ENCODE measurements at regions of chr4 and their contacts with region 1.

Region 1: GRCh38 chr4:152640058-152640833 is 39.6 kb downstream of the TMEM154 start:
- DNase-seq: peak; percentile 20 to 25
- ATAC-seq: peak; percentile 68 to 74; a peak in 4 of 6 replicates
- H3K4me3 ChIP-seq: no peak overlapping the region
- H3K27ac ChIP-seq: no peak overlapping the region
- H3K4me1 ChIP-seq: no peaks in the 10 kb centered on the region; the same call in 2 of the 3 replicates
- CTCF ChIP-seq: peak; percentile 69
- EP300 ChIP-seq: no peak
- POLR2A ChIP-seq: no peak
- RAD21 ChIP-seq: peak; percentile 71 to 75

Region 2: DNA sequence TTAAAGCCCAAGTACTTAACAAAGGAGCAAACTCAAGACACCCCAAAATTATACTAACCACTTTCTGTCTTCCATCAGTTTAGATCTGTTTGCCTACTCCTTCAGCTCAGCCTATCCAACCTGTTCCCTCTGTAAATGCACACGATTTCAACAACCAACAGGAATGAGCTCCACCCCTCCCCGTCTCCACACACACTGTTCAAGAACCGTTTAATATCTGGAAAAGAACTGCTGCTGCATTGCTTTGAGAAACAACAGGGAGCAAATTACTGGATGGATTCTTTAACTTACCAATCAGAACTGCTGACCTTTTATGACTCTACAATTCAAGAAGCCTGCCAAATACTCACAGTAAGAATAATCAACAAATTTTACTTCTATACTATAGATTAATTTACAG is 191.4 kb before region 1 on chr4:
- CTCF ChIA-PET with region 1: interaction called, 10 read pairs
- POLR2A ChIA-PET with region 1: no interaction called
- DNase-seq: no peak
- ATAC-seq: no peak
- H3K4me3 ChIP-seq: no peak overlapping the region
- H3K27ac ChIP-seq: no peak overlapping the region
- H3K4me1 ChIP-seq: no peaks in the 10 kb centered on the region
- CTCF ChIP-seq: no peak
- EP300 ChIP-seq: no peak
- POLR2A ChIP-seq: no peak
- RAD21 ChIP-seq: no peak

Region 3: DNA sequence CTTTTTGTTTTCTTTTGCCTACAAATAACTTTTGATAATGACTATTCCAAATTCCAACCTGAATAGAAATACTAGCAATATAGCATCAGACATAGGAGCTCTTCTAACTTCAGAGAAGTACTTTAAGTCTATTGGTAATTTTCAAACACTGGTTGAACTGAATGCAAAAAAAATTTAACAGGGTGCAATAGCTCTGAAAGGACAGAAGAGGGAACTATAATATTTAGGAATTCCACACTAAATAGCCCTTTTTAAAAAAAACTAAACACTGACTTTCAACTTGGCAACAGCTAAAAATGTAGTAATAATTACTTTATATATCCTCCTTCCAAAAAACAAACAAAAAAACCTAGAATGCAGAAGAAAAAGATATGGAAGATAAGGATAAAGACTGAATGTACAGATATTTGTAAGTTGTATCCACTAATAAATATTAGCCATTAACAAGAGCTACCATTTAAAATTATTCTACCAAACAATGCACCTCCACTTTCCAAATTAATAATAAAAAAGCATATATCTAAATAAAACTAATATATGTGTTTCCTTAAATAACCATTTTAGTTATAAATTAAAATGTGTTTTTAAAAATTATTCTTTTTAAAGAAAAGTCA is 185.7 kb before region 1 on chr4:
- CTCF ChIA-PET with region 1: interaction called, 11 read pairs
- POLR2A ChIA-PET with region 1: no interaction called
- DNase-seq: peak; percentile 10 to 12
- ATAC-seq: peak in 1 of 2 experiments; percentile 30; a peak in 1 of 6 replicates
- H3K4me3 ChIP-seq: no peak overlapping the region
- H3K27ac ChIP-seq: no peak overlapping the region
- H3K4me1 ChIP-seq: peaks cover 8% of the 10 kb centered on the region; the same call in 1 of the 3 replicates
- CTCF ChIP-seq: peak; percentile 59
- EP300 ChIP-seq: no peak
- POLR2A ChIP-seq: no peak
- RAD21 ChIP-seq: peak; percentile 68 to 72

Region 4: DNA sequence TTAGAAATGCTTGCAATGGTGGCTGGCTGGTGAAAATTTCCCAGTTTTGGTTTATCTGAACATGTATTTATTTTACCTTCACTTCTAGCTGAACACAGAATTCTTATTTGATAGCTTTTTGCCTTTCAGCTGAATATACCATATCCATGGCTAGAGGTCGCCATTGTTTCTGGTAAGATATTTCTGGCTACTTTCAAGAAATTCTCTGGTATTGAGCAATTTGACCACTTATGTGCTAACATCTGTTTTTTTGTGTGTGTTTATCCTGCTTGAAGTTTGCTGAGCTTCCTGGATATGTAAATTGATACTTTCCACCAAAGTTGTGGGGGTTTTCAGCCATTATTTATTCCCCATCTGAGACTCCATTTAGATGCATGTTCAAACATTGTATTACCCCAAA is 179.8 kb before region 1 on chr4:
- CTCF ChIA-PET with region 1: interaction called, 11 read pairs
- POLR2A ChIA-PET with region 1: no interaction called
- DNase-seq: peak in 1 of 2 experiments; percentile 56
- ATAC-seq: 0 out of 6 replicates have a peak, but pooled peaks of 1 of the 2 experiments have one; percentile 30
- H3K4me3 ChIP-seq: no peak overlapping the region
- H3K27ac ChIP-seq: no peak overlapping the region
- H3K4me1 ChIP-seq: peaks cover 23% of the 10 kb centered on the region; the same call in 2 of the 3 replicates
- CTCF ChIP-seq: peak; percentile 51
- EP300 ChIP-seq: no peak
- POLR2A ChIP-seq: no peak
- RAD21 ChIP-seq: peak; percentile 50 to 64

Region 5: DNA sequence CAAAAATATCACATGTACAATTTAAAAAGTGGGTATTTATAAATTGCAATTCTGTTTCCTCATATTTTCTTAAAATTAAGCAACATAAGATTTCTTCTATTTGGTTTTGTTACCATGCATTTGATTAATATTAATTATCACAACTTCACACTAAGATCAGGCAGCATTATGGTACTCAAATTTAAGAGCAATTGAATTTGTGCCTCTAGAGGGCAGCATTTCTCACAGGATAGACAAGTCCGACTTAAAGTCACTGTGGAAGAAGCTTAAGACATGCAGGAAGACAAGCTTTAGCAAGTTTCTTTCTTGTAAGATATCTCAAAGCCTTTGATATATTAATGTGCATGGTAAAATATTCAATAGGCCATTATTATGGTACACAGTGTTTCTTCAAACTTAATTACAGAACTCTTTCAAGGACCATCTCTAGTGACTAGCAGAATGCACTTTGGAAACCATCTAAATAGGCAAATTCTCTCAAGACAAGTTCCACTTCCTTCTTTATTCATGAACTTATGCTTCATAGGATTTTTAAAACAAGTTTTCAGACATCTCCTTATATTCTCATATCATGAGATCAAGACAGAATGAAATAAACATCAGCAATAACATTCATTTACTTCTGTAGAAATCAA is 139.3 kb before region 1 on chr4:
- CTCF ChIA-PET with region 1: interaction called, 16 read pairs
- POLR2A ChIA-PET with region 1: no interaction called
- DNase-seq: peak; percentile 30 to 86
- ATAC-seq: peak; percentile 66 to 84; a peak in 4 of 6 replicates
- H3K4me3 ChIP-seq: no peak overlapping the region
- H3K27ac ChIP-seq: no peak overlapping the region
- H3K4me1 ChIP-seq: peaks cover 12% of the 10 kb centered on the region; the same call in 2 of the 3 replicates
- CTCF ChIP-seq: peak; percentile 68
- EP300 ChIP-seq: no peak
- POLR2A ChIP-seq: no peak
- RAD21 ChIP-seq: peak; percentile 62 to 64